Calu3 (cell line): ENCODE measurements at regions of chr13 and their contacts with region 1.

Region 1: GRCh38 chr13:24220086-24220703 is 59.7 kb downstream of the SPATA13 start:
- DNase-seq: peak; percentile 57
- H3K4me3 Mint-ChIP-seq: no peak overlapping the region
- H3K27ac Mint-ChIP-seq: no peak overlapping the region
- H3K4me1 Mint-ChIP-seq: peaks cover 48% of the 10 kb centered on the region
- H3K27me3 Mint-ChIP-seq: no peaks in the 10 kb centered on the region
- CTCF ChIP-seq: peak; percentile 31

Region 2: DNA sequence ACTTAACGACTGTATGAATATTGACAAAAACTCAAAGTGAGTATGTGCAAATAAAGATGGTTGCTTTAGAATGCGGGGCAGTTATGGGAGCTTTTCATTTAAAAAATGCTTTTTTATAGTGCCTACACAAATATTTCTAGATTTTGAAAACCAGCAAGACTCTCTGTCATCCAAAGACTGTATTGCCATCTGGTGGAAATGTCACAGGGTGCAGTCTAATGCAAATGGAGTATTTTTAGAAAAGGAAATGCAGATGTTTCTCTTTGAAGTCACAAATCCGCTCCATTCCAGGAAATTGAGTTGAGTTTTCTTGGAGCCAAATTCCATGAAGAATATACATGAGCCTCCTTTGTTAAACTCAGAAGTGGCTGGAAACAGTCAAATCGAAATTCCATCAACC is 320.6 kb before region 1 on chr13:
- CTCF ChIA-PET with region 1: no interaction called
- intact Hi-C with region 1: no loop called
- DNase-seq: peak; percentile 33
- H3K4me3 Mint-ChIP-seq: no peak overlapping the region
- H3K27ac Mint-ChIP-seq: no peak overlapping the region
- H3K4me1 Mint-ChIP-seq: peaks cover 9% of the 10 kb centered on the region
- H3K27me3 Mint-ChIP-seq: peaks cover 21% of the 10 kb centered on the region
- CTCF ChIP-seq: no peak

Region 3: DNA sequence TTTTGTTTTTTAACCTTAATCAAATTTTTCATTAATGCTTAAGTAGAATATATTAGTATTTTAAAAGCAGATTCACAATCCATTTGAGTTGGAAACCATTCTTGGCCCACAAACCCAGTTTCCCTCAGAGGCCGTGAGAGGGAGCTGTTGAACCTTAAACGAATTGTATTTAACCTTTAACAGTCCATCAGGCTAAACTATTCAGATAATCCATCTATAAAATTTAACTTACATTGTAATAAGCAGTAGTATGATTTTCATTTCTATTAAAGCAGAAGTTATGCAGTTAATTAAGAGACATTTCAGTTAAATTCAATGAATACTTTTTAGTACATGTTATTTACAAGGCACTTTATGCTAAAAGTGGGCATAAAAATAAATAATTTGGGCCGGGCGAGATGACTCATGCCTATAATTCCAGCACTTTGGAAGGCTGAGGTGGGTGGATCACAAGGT is 199.8 kb before region 1 on chr13:
- CTCF ChIA-PET with region 1: interaction called, 14 read pairs
- intact Hi-C with region 1: loop called (anchors 1 kb)
- DNase-seq: peak; percentile 52
- H3K4me3 Mint-ChIP-seq: no peak overlapping the region
- H3K27ac Mint-ChIP-seq: no peak overlapping the region
- H3K4me1 Mint-ChIP-seq: no peaks in the 10 kb centered on the region
- H3K27me3 Mint-ChIP-seq: no peaks in the 10 kb centered on the region
- CTCF ChIP-seq: no peak

Region 4: DNA sequence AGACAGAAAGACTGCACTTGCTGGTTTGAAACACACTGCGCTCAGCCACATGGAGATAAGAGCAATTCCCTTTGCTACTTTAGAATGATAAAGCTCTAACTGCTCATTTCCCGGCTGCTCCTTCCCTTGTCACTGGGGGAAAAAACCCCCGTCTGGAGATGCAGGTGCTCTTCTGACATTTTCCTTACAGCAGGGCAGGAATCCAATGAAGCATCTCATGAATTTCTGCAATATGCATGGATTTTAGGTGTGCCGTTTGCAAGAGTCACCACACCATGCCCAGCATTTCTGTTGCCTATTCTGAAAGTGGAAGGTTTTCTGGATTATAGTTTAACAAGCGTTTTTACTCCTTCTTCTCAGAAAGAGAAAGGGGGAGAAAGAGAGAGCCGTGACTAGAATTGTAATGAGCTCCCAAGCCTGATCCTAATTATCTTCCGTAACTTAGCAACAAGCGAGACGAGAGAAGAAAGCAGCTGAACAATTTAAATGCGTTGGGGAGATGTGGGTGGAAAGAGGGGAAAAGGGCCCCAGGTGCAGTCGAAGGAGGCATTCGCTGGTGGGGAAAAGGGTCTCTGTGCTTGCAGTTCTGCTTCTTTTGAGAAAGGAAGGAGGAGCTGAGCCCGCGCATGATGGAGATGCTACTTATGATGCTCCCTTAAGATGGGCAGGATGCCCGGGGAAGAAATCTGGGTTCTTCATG is 136.3 kb before region 1 on chr13:
- CTCF ChIA-PET with region 1: no interaction called
- intact Hi-C with region 1: no loop called
- DNase-seq: no peak
- H3K4me3 Mint-ChIP-seq: no peak overlapping the region
- H3K27ac Mint-ChIP-seq: no peak overlapping the region
- H3K4me1 Mint-ChIP-seq: peaks cover 24% of the 10 kb centered on the region
- H3K27me3 Mint-ChIP-seq: no peaks in the 10 kb centered on the region
- CTCF ChIP-seq: no peak

Region 5: GRCh38 chr13:24148399-24149305 is 71.5 kb before region 1 on chr13:
- CTCF ChIA-PET with region 1: interaction called, 5 read pairs
- intact Hi-C with region 1: loop called (anchors 5 kb)
- DNase-seq: peak; percentile 80
- H3K4me3 Mint-ChIP-seq: peak overlapping the region; percentile 25
- H3K27ac Mint-ChIP-seq: peak overlapping the region; percentile 90
- H3K4me1 Mint-ChIP-seq: peaks cover 66% of the 10 kb centered on the region
- H3K27me3 Mint-ChIP-seq: no peaks in the 10 kb centered on the region
- CTCF ChIP-seq: no peak

Region 6: DNA sequence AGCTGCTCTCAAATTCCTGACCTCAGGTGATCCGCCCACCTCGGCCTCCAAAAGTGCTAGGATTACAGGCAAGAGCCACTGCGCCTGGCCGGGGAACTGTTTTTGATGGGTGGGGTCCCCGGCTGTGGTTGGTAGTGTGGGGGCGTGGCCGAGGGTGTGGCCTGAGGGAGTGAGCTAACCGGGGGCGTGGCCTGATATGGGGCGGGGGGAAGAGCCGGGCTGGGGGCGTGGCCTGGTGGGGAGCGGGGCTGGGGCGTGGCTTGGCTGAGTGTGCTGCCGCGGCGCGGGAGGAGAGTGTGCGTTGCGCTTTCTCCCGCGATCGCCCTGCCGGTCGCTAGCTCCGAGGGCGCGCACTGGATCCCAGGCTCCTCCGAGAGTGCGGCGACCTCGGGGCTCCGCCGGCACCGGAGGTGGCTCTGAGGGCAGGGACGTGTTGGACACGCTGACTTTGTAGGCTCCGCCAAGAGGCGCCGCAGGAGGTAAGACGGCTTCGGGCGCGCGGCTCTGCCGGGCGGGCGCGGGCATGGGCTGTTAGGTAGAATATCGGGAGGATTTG is 59.7 kb before region 1 on chr13 and contains the start of gene SPATA13:
- CTCF ChIA-PET with region 1: interaction called, 5 read pairs
- intact Hi-C with region 1: loop called (anchors 5 kb)
- DNase-seq: peak; percentile 95
- H3K4me3 Mint-ChIP-seq: peak within 1 kb of the TSS; percentile 78
- H3K27ac Mint-ChIP-seq: peak within 1 kb of the TSS; percentile 34
- H3K4me1 Mint-ChIP-seq: peaks cover 10% of the 10 kb centered on the region
- H3K27me3 Mint-ChIP-seq: no peaks in the 10 kb centered on the region
- CTCF ChIP-seq: no peak
- total RNA-seq, gene SPATA13: 33.8 and 35.9 TPM in 2 replicates

Region 7: GRCh38 chr13:24187185-24187584 is 33.0 kb before region 1 on chr13:
- CTCF ChIA-PET with region 1: no interaction called
- intact Hi-C with region 1: no loop called
- DNase-seq: no peak
- H3K4me3 Mint-ChIP-seq: no peak overlapping the region
- H3K27ac Mint-ChIP-seq: no peak overlapping the region
- H3K4me1 Mint-ChIP-seq: peaks cover 59% of the 10 kb centered on the region
- H3K27me3 Mint-ChIP-seq: no peaks in the 10 kb centered on the region
- CTCF ChIP-seq: no peak

Region 8: GRCh38 chr13:24254146-24254841 is 34.1 kb after region 1 on chr13:
- CTCF ChIA-PET with region 1: no interaction called
- intact Hi-C with region 1: no loop called
- DNase-seq: no peak
- H3K4me3 Mint-ChIP-seq: no peak overlapping the region
- H3K27ac Mint-ChIP-seq: no peak overlapping the region
- H3K4me1 Mint-ChIP-seq: no peaks in the 10 kb centered on the region
- H3K27me3 Mint-ChIP-seq: no peaks in the 10 kb centered on the region
- CTCF ChIP-seq: no peak